Activated CD4-positive, alpha-beta memory T cell treated with anti-CD3 and anti-CD28 coated beads for 36 hours (primary cell): ENCODE measurements at regions of chr7 and their contacts with region 1.

Region 1: GRCh38 chr7:37833107-37833817 is 15.1 kb upstream of the NME8 start:
- DNase-seq: peak; percentile 39
- H3K4me3 Mint-ChIP-seq: peak overlapping the region; percentile 64
- H3K27ac Mint-ChIP-seq: no peak overlapping the region
- H3K4me1 Mint-ChIP-seq: peaks cover 7% of the 10 kb centered on the region
- H3K27me3 Mint-ChIP-seq: peaks cover 9% of the 10 kb centered on the region

Region 2: DNA sequence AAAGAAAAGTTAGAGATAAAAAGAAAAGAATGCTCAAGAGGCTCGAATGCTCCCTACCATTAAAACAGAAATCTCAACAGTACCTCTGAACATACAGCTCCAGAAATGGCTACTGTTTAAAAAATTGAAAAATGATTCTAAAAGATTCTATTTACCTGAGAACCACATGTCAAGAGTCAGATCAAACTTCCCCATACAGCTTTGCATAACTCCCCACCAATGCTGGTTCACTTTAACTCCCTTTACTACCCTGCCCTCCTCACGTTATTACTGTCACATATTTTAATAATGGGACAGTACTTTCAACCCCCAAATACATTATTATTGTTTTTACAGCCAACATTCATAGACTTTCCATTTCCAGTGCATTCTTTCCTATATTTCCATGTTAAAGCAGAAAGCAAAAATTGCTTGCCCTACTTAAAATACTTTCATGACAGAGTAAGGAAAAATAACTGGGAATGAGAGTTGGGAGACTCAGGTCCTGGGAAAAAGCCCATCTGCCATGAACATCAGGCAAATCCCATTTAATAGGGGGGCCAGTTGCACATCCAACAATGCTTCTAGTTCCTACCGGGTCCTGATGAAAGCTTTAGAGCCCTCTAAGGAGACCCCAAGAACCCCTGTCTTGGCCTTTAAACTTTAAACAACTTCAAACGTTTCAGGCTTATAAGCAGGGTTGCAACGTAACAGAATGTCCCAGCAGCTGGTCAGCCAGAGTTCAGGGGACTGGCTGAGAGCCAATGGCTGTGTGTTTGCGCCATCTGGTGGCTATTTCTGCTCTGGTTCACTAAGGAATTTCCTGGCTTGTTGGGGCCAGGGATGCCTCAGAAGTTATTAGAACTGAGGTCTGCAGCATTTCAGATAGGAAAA is 632.0 kb before region 1 on chr7:
- CTCF ChIA-PET with region 1: no interaction called
- POLR2A ChIA-PET with region 1: no interaction called
- intact Hi-C with region 1: loop called (anchors 10 kb)
- DNase-seq: peak; percentile 62
- H3K4me3 Mint-ChIP-seq: no peak overlapping the region
- H3K27ac Mint-ChIP-seq: no peak overlapping the region
- H3K4me1 Mint-ChIP-seq: peaks cover 11% of the 10 kb centered on the region
- H3K27me3 Mint-ChIP-seq: no peaks in the 10 kb centered on the region